ENCODE measurements at regions of chr1 and their contacts with region 1.

Region 1: DNA sequence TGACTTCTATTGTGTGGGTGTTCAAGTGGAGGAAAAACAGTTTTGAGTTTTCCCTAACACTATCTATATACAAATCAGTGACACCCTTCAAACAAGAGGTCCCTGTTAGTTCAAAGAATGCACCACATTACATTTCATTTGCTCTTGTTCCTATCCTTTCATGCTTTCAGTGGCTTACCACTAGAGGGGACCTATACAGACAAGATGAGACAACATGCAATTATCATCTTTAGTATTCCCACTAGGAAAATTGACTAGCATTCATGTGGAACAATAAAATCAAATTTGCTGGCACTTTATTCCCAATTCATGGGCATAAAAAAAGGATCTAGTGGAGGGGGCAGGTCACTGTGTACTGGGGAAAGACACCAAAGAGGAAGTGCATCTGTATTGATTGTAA is 13.3 kb upstream of the SIPA1L2 start:
- DNase-seq: no peak
- ATAC-seq: no peak
- H3K4me3 ChIP-seq: no peak overlapping the region
- H3K27ac ChIP-seq: no peak overlapping the region
- H3K4me1 ChIP-seq: no peaks in the 10 kb centered on the region
- H3K27me3 ChIP-seq: no peaks in the 10 kb centered on the region
- CTCF ChIP-seq: peak in 1 of 12 donors; percentile 9
- POLR2A ChIP-seq: no peak

Region 2: GRCh38 chr1:232038706-232039677 is 604.3 kb before region 1 on chr1:
- intact Hi-C with region 1: no loop called
- DNase-seq: peak in 4 of 5 donors; percentile 33 to 58 (median 41)
- ATAC-seq: peak; percentile 34 to 79 (median 64)
- H3K4me3 ChIP-seq: no peak overlapping the region
- H3K27ac ChIP-seq: no peak overlapping the region
- H3K4me1 ChIP-seq: peaks cover 0 to 14% (median 0%) of the 10 kb centered on the region in 12 donors
- H3K27me3 ChIP-seq: no peaks in the 10 kb centered on the region
- CTCF ChIP-seq: no peak
- POLR2A ChIP-seq: no peak

Region 3: DNA sequence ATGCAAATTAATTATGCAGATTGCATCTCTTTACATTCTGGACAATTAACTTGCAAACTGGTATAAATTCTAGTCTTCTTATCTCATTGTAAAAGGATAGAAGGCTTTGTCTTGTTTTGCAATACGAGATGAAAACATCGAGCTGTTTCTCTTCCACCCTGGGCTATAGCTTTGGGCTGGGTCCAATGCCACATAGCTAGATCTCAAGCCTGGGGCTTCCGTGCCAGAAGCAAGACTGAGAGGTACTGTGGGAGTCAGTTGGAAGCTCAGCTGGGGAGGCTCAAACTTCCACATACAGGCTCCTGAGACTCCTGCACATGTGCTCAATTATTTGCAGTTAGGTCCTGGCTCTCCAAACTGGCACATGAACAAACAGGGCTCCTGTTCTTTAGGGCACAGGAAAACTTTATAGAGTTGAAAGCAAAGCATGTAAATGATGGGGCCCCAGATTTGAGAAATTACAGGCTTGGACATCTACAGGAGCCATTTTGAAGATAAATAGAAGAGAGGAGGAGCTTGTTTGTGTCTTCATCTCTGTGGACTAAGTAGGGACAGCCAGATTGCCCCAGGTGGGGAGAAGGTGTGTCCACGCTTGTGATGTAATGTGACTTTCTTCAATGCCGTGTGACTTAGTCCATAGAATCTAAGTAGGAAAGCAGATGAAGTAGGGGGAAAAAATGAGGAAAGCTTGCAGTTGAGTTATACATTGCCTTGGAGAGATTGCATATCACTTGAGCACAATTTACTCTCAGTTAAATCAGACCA is 52.6 kb after region 1 on chr1:
- intact Hi-C with region 1: no loop called
- DNase-seq: no peak
- ATAC-seq: no peak
- H3K4me3 ChIP-seq: no peak overlapping the region
- H3K27ac ChIP-seq: no peak overlapping the region
- H3K4me1 ChIP-seq: no peaks in the 10 kb centered on the region
- H3K27me3 ChIP-seq: peaks cover 0 to 4% (median 0%) of the 10 kb centered on the region in 9 donors
- CTCF ChIP-seq: no peak
- POLR2A ChIP-seq: no peak

Region 4: DNA sequence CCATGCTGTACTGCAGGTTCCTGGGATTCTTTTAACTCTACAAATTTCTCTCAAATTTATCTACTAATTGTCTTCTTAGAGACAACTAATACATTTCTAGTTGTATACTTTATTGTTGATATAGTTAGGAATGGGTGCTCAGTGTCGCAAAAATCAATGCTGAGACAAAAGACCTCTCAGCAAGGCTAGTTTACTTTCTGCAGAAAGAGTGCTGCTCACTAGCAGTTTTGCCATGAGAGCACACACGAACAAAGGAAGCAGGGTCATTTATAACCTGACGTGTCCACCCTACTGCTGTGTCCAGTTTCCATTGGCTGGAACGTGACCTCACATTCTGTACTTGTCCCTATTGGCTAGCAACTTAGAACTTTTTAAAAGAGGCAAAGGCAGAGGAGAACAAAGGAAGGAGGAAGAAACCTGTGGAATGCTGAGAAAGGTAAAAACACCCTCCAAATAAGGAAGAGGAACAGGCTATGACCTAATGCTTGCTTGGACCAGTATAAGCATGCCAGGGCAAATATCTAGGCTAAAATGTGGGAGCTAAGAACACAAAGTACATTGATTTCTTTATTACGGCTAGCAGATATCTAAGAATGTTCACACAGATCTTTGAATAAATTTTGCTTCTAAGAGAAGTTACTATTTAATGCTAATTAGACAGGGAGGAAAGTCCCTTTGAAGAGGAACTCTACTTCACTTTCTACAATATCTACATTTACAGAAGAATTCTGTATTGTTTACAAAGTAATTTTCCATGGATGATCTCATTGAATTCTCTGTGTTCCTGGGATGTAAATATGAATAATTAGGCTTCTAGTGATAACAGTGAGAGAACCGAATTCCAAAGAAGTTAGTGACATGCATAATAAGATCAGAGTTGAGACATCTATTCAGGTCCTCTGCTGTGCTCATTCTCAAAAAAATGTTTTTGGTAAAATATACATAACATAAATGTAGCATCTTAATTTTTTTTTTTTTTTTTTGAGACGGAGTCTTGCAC is 76.0 kb after region 1 on chr1:
- intact Hi-C with region 1: loop called in 1 of 10 experiments (anchors 10 kb)
- DNase-seq: no peak
- ATAC-seq: no peak
- H3K4me3 ChIP-seq: no peak overlapping the region
- H3K27ac ChIP-seq: no peak overlapping the region
- H3K4me1 ChIP-seq: no peaks in the 10 kb centered on the region
- H3K27me3 ChIP-seq: peaks cover 0 to 3% (median 0%) of the 10 kb centered on the region in 9 donors
- CTCF ChIP-seq: no peak
- POLR2A ChIP-seq: no peak

Region 5: DNA sequence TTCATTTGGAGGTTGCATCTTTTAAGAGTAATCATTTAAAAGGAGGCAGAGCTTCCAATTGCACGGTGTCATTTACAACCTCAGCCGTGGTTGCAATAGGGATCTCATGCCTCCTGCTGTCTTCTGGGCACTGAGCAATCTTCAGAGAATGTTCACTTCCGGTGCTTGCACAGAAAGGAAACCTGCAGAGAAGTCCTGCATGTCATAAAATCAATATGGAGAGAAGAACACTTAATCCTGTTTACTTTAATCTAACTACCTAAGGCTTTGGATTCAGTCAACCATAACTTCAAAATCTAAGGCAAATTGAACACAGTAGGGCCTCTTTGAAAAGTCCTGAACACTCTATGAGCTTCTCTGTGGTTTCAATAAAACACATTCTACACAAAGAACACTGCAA is 150.7 kb after region 1 on chr1:
- intact Hi-C with region 1: loop called in 2 of 10 experiments (anchors 5 to 10 kb)
- DNase-seq: no peak
- ATAC-seq: no peak
- H3K4me3 ChIP-seq: no peak overlapping the region
- H3K27ac ChIP-seq: no peak overlapping the region
- H3K4me1 ChIP-seq: peaks cover 0 to 37% (median 3%) of the 10 kb centered on the region in 12 donors
- H3K27me3 ChIP-seq: no peaks in the 10 kb centered on the region
- CTCF ChIP-seq: no peak
- POLR2A ChIP-seq: no peak

Region 6: DNA sequence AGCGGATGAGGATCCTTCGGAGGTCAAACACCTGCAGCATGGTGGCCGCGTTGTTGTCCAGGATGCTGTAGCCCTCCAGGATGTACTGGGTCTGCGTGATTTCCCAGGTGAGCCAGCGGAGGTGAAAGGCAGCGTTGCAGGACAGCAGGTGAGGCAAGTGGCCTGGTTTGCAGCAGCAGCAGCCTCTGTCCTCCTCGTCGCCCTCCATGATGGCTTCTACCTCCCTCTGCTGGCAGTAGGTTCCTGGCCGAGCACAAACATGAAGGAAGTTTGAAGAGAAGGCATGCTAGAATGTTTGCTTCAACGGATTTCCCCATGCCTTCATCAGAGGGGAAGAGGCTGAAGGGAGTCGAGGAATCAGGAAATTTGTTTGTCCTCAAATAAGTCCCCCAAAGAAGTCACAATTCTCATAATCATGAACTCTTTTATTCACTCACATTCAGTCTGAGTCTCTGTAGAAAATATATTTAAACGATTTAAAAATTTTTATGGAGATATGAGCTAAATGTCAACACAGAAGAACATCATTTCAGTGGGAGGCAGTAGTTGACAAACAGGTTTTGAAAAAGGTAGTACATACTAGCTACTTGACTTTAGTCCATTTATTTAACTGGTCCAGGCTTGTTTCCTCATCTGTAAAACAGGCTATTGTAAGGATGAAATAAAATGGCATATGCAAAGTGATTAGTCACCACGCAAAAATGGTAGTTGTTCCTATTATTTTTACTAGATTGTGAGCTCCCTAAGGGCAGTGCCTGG is 382.1 kb after region 1 on chr1:
- intact Hi-C with region 1: loop called in 4 of 10 experiments (anchors 5 kb)
- DNase-seq: peak in 4 of 5 donors; percentile 40 to 61 (median 44)
- ATAC-seq: peak in 3 of 4 donors; percentile 59 to 70 (median 69)
- H3K4me3 ChIP-seq: no peak overlapping the region
- H3K27ac ChIP-seq: no peak overlapping the region
- H3K4me1 ChIP-seq: peaks cover 0 to 14% (median 3%) of the 10 kb centered on the region in 12 donors
- H3K27me3 ChIP-seq: no peaks in the 10 kb centered on the region
- CTCF ChIP-seq: peak; percentile 29 to 74 (median 56)
- POLR2A ChIP-seq: no peak

Measured in heart left ventricle (tissue), 16 donors.